ENCODE measurements at regions of chr9 and their contacts with region 1.

Region 1: GRCh38 chr9:38088006-38088925 is 19.2 kb upstream of the SHB start:
- DNase-seq: peak; percentile 60 to 85 (median 76)
- H3K4me3 ChIP-seq: no peak overlapping the region
- H3K27ac ChIP-seq: no peak overlapping the region
- H3K4me1 ChIP-seq: no peaks in the 10 kb centered on the region
- H3K27me3 ChIP-seq: no peaks in the 10 kb centered on the region
- CTCF ChIP-seq: peak; percentile 62 to 66 (median 63)
- EP300 ChIP-seq: no peak
- POLR2A ChIP-seq: no peak

Region 2: GRCh38 chr9:37920471-37921167 is 167.6 kb before region 1 on chr9:
- intact Hi-C with region 1: loop called in 2 of 4 experiments (anchors 5 kb)
- DNase-seq: peak in 1 of 5 donors; percentile 33
- H3K4me3 ChIP-seq: no peak overlapping the region
- H3K27ac ChIP-seq: no peak overlapping the region
- H3K4me1 ChIP-seq: peaks cover 4% of the 10 kb centered on the region
- H3K27me3 ChIP-seq: no peaks in the 10 kb centered on the region
- CTCF ChIP-seq: no peak
- EP300 ChIP-seq: no peak
- POLR2A ChIP-seq: no peak

Region 3: DNA sequence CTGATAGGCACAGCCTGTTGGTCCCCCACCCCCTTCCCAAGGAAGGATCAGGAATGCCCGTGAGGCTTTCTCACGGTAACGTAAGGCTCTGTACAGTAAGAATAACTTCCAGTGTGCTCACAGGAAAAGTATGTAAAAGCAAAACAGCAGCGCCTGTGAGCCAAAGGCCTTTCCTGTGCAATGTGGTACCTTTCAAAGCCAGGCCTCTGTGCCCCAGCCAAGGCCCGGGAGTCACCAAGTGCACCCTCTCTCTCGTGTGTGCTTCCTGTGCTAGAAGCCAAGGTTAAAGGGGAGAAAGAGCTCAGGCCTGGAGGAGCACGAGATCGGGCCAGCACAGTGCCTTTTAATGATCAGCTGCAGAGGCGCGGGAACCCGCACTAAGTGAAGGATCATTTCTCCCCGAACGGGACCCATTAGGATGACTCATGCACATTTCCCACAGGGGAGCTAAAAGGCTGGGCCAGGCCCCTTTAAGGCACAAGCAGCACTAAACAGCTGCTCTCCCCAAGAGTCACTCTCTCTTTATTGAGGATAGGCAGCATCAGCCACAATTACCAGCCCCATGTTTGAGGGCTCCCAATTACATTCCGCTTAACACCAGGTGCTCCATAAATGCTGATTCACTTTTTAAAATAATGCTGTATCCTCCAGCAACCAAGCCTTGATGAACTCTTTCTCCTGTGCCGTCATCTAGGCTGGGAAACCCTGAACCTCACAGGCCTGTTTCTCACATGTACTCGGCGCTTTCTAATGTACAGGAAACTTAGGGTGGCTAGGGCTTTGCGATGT is 62.1 kb before region 1 on chr9:
- intact Hi-C with region 1: loop called in 1 of 4 experiments (anchors 10 kb)
- DNase-seq: peak; percentile 38 to 68 (median 57)
- H3K4me3 ChIP-seq: no peak overlapping the region
- H3K27ac ChIP-seq: peak overlapping the region in 1 of 2 donors; percentile 48
- H3K4me1 ChIP-seq: peaks cover 12% of the 10 kb centered on the region
- H3K27me3 ChIP-seq: no peaks in the 10 kb centered on the region
- CTCF ChIP-seq: no peak
- EP300 ChIP-seq: no peak
- POLR2A ChIP-seq: no peak

Region 4: GRCh38 chr9:38362852-38363593 is 274.8 kb after region 1 on chr9:
- intact Hi-C with region 1: loop called in 1 of 4 experiments (anchors 10 kb)
- DNase-seq: peak; percentile 40 to 54 (median 51)
- H3K4me3 ChIP-seq: no peak overlapping the region
- H3K27ac ChIP-seq: no peak overlapping the region
- H3K4me1 ChIP-seq: peaks cover 8% of the 10 kb centered on the region
- H3K27me3 ChIP-seq: no peaks in the 10 kb centered on the region
- CTCF ChIP-seq: peak; percentile 48 to 63 (median 55)
- EP300 ChIP-seq: no peak
- POLR2A ChIP-seq: no peak

Region 5: DNA sequence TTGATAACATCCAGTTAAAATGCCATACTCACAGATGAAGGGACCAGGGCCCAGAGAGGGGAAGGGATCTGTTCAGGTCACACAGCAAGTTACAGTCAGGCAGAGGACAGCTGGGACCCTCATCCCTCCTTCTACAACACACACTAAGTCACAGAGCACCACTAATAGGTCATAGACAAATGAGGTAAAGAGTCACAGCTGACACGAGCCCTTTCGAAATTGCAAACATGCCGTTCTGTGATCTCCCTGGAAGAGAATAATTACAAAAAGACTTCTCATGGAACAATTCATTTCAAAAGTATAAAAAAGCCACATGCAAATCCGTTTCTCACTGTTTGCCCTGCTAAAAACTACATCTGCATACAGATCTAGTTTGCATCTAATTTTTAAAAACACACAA is 320.5 kb after region 1 on chr9:
- intact Hi-C with region 1: loop called in 2 of 4 experiments (anchors 10 kb)
- DNase-seq: no peak
- H3K4me3 ChIP-seq: no peak overlapping the region
- H3K27ac ChIP-seq: no peak overlapping the region
- H3K4me1 ChIP-seq: no peaks in the 10 kb centered on the region
- H3K27me3 ChIP-seq: no peaks in the 10 kb centered on the region
- CTCF ChIP-seq: no peak
- EP300 ChIP-seq: no peak
- POLR2A ChIP-seq: no peak

Region 6: GRCh38 chr9:38417003-38417945 is 329.0 kb after region 1 on chr9:
- intact Hi-C with region 1: loop called in 1 of 4 experiments (anchors 10 kb)
- DNase-seq: no peak
- H3K4me3 ChIP-seq: no peak overlapping the region
- H3K27ac ChIP-seq: no peak overlapping the region
- H3K4me1 ChIP-seq: no peaks in the 10 kb centered on the region
- H3K27me3 ChIP-seq: no peaks in the 10 kb centered on the region
- CTCF ChIP-seq: no peak
- EP300 ChIP-seq: no peak
- POLR2A ChIP-seq: no peak